Dorsolateral prefrontal cortex (tissue), 120 donors: ENCODE measurements at regions of chr18 and their contacts with region 1.

Region 1: DNA sequence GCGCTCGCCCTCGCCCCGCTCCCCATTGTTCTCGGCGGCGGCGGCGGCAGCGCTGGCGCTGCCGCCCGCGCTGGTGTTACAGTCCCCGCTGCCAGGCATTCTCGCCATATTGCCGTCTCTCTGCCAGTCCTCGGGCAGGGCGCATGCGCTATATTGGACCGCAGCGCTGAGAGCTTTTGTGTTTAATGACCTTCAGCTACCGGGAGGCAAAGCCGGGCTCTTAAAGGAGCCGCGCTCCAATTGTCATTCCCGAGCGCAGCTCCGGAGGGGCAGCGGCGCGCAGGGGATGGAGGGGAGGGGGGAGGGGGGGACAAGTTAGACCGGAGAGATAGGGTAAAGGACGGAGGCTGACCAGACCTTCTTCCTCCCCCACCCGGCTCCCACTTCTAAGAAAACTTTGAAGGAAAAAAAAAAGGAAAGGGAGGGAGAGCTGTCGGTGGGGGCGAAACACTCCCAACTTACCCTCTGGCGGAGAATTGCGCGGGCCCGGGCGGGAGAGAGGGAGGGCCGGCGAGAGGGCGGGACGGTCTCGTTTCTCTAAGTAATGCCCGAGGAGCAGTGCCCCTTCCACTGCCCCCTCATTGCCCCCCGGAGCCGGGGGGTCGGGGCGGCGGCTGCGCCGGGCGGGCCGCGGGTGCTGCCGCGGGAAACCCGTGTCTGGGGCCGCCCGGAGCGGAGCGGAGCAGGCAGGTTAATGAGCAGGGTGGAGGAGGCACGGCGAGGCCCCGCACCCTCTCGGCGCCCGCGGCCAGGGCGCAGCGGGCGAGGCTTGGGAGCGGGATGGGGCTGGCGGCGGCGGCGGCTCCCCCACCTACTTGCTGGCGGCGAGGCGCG is at the start of gene KCTD1:
- DNase-seq: peak; percentile 63 to 83 (median 76)
- H3K4me3 ChIP-seq: peak within 1 kb of the TSS; percentile 47 to 88 (median 73)
- H3K27ac ChIP-seq: peak within 1 kb of the TSS in 58 of 59 donors; percentile 34 to 91 (median 81)
- H3K27me3 ChIP-seq: no peaks in the 10 kb centered on the region
- CTCF ChIP-seq: no peak
- total RNA-seq, gene KCTD1: 40.5 to 147 (median 89.3) TPM

Region 2: DNA sequence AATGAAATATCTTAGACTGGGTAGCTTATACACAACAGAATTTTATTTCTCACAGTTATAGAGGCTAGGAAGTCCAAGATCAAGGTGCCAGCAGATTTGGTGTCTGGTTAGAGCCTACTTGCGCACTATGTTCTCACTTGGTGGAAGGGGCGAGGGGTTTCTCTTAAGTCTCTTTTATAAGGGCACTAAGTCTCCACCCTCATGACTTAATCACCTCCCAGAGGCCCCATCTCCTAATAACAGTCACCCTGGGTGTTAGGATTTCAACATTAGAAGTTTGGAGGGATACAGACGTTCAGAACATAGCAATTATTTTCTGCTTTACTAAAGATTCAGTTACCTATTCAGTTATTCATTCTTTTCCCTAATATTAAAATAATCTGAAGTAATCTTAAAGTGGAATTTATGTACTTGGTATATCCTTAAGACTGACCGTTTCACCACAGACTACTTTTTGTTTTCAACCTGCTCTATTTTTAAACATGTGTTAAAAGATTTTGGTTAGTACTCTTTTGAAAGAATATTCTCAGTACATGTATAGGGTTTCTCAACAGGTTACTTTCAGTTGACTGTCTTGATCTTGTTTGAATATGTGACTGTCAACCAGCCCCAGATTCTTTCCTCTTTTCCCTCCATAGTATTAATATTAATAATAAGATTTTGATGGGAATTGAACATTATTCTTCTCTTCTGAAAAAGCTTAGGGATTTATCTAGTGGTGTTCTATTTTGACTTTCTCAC is 192.4 kb before region 1 on chr18:
- intact Hi-C with region 1: no loop called
- DNase-seq: no peak
- H3K4me3 ChIP-seq: no peak overlapping the region
- H3K27ac ChIP-seq: no peak overlapping the region
- H3K27me3 ChIP-seq: no peaks in the 10 kb centered on the region
- CTCF ChIP-seq: no peak

Region 3: GRCh38 chr18:26394047-26394654 is 154.5 kb before region 1 on chr18:
- intact Hi-C with region 1: no loop called
- DNase-seq: no peak
- H3K4me3 ChIP-seq: no peak overlapping the region
- H3K27ac ChIP-seq: no peak overlapping the region
- H3K27me3 ChIP-seq: no peaks in the 10 kb centered on the region
- CTCF ChIP-seq: no peak

Region 4: GRCh38 chr18:26405190-26405801 is 143.3 kb before region 1 on chr18:
- intact Hi-C with region 1: loop called in 1 of 2 experiments (anchors 5 kb)
- DNase-seq: peak; percentile 33 to 76 (median 54)
- H3K4me3 ChIP-seq: no peak overlapping the region
- H3K27ac ChIP-seq: no peak overlapping the region
- H3K27me3 ChIP-seq: no peaks in the 10 kb centered on the region
- CTCF ChIP-seq: peak in 54 of 56 donors; percentile 9 to 79 (median 56)

Region 5: DNA sequence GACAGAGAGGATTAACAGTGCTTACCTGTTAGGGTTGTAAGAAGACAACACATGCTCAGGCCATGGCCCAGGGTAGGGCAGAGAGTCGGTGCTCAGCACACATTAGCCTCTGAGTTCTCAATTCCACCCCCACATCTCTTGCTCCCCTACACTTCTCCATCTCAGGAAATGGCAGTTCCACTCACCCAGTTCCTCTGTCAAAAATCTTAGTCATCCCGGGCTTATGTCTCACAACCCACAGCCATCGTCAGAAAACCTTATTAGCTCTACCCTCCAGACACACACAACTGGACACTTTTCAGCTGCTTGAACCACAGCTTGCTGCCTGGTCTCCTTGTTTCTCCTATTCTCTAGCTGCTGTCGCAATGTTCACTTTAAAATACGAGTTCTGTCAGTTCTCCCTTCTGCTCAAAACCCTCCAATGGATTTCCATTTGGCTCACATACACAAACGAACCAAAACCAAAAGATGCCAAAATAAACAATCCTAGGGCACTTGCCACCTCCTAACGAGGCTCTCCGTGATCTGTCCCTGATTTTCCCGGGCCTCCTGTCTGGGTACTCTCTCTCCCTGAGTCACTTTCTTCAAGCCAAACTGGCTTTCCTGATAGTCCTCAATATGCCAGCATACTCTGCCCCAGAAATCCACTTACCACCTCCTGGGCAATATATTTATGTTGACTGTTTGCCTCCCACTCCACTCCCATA is 90.0 kb before region 1 on chr18:
- intact Hi-C with region 1: loop called in 1 of 2 experiments (anchors 2 kb)
- DNase-seq: peak in 1 of 10 donors; percentile 21
- H3K4me3 ChIP-seq: no peak overlapping the region
- H3K27ac ChIP-seq: peak overlapping the region in 55 of 59 donors; percentile 8 to 87 (median 67)
- H3K27me3 ChIP-seq: no peaks in the 10 kb centered on the region
- CTCF ChIP-seq: no peak

Region 6: GRCh38 chr18:26503382-26503781 is 45.3 kb before region 1 on chr18:
- intact Hi-C with region 1: no loop called
- DNase-seq: no peak
- H3K4me3 ChIP-seq: peak overlapping the region in 3 of 59 donors; percentile 6 to 45 (median 31)
- H3K27ac ChIP-seq: no peak overlapping the region
- H3K27me3 ChIP-seq: no peaks in the 10 kb centered on the region
- CTCF ChIP-seq: no peak

Region 7: GRCh38 chr18:26642440-26643348 is 94.0 kb after region 1 on chr18:
- intact Hi-C with region 1: loop called in 1 of 2 experiments (anchors 5 kb)
- DNase-seq: no peak
- H3K4me3 ChIP-seq: no peak overlapping the region
- H3K27ac ChIP-seq: peak overlapping the region in 41 of 59 donors; percentile 2 to 83 (median 55)
- H3K27me3 ChIP-seq: no peaks in the 10 kb centered on the region
- CTCF ChIP-seq: no peak

Region 8: DNA sequence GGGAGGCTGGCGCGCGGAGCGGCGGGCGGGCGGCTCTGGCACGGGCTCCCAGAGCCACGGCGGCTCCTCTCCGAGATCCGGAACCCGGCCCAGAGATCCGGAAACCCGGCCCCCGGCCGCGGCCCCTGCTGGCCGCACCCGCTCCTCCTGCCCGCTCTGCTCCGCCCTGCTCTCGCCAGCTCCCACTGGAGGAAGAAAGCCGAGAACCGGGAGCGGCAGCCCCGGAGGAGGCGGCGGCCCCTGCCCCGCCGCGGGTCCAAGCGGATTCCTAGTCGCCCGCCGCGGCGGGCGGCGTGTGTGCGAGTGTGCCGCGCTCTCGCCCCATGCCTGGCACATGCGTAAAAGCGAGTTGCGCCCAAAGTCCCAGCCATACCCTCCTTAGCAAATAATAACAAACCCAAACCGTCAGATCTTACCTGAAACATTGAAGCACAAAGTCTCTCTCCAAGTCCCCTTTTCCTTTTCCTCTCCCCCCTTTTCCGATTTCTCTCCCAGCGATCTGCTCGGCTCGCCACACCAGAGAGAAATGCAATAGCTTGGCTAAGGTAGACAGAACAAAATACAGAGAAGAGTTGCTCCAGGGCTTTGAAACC is 108.4 kb after region 1 on chr18:
- intact Hi-C with region 1: loop called (anchors 2 to 5 kb)
- DNase-seq: peak; percentile 39 to 82 (median 68)
- H3K4me3 ChIP-seq: peak overlapping the region; percentile 46 to 84 (median 73)
- H3K27ac ChIP-seq: peak overlapping the region; percentile 60 to 99 (median 96)
- H3K27me3 ChIP-seq: no peaks in the 10 kb centered on the region
- CTCF ChIP-seq: peak in 33 of 56 donors; percentile 10 to 55 (median 29)